ENCODE measurements at regions of chr12 and their contacts with region 1.

Region 1: DNA sequence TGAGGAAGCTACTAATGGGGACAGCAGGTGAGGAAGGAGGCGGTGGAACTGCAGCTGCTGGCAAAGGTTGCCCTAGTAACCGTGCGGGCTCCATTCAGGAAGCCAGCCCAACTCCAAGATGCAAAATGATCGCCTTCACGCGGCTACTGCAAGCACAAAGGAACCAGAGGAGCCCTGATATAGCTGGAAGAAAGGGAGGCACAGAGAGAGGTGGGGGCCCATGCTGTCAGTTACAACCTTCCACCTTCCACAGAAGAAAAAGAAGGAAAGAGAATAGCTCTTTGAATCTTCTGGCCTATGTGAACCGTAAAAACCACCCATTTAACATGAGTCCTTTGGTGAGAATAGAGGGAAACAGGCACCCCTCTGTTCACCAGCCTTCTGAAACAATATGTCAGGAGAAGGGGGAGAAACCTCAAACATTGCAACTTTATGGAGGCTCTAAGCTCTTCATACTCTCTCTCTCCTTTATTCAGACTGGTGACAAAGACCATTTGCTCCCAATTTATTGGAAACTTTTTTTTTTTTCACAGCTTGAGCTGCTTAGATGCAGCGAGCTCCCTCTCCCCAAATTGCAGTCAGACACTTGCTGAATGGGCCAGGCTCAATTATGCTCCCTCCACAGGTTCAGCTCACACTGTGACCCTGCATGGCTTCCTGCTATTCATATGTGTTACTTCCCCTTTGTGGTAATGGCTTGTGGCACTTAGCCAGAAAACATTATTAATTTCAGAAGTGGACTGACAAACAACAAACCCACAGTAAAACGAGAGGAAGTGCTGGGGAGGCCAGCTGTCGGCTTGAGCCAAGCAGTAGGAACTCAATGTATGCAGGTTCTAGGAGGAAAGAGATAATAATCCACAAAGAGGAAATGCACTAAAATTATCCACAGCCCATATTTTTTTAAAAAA is 6.2 kb downstream of the DUSP6 start:
- DNase-seq: peak; percentile 70 to 80 (median 72)
- ATAC-seq: peak; percentile 67 to 84 (median 80)
- H3K4me3 ChIP-seq: peak overlapping the region in 9 of 12 donors; percentile 76 to 95 (median 87)
- H3K27ac ChIP-seq: peak overlapping the region; percentile 17 to 99 (median 72)
- H3K4me1 ChIP-seq: peaks cover 3 to 66% (median 40%) of the 10 kb centered on the region in 12 donors
- H3K27me3 ChIP-seq: no peaks in the 10 kb centered on the region
- CTCF ChIP-seq: no peak
- POLR2A ChIP-seq: no peak

Region 2: DNA sequence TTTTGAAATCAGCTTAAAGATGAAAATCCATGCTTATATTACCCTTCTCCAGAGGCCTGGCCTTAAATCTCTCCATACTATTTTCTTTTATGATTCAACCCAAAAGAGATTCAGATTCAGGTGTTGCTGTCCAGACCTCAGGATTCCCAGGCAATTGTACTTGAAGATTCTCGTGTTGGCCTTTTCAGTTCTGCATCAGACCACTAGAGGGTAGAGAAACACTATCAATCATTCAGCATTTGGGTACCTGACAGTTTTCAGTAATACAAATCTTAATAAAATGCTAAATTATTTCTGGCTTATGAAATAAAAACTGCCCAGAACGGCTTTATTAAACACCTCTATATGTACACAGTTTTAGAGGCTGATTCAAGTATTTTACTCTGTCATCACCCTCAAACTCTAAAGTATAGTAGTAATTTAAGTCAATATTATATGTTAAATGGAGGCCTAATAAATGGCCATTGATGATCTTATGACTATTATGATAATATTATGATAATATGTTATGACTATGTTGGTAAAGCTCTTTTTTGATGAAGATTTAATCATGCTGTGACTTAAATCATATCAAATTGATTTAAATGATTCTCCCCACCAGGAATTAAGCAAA is 294.9 kb before region 1 on chr12:
- intact Hi-C with region 1: loop called in 6 of 10 experiments (anchors 5 to 10 kb)
- DNase-seq: peak in 2 of 5 donors; percentile 15 to 22
- ATAC-seq: peak in 3 of 4 donors; percentile 68 to 76 (median 70)
- H3K4me3 ChIP-seq: no peak overlapping the region
- H3K27ac ChIP-seq: no peak overlapping the region
- H3K4me1 ChIP-seq: peaks cover 0 to 12% (median 0%) of the 10 kb centered on the region in 12 donors
- H3K27me3 ChIP-seq: no peaks in the 10 kb centered on the region
- CTCF ChIP-seq: peak; percentile 86 to 97 (median 94)
- POLR2A ChIP-seq: no peak

Region 3: DNA sequence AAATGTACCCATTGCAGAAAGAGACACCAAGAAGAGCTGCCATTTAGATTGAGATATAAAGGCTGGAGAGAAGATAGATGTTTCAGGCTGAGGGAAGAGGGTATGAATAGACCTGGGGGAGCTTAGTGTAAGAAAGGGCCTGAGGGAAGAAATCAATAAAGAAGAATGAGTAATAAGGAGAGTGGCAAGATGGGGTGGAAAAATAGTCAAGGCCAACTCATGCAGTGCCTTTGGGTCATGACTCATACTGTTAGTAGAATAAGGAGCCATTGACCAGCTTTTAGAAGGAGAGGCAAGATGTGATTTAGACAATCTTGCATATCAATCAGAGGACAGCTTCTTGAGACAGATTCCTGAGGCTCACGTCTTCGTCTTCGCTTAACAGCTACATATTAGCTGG is 281.3 kb before region 1 on chr12:
- intact Hi-C with region 1: loop called in 2 of 10 experiments (anchors 5 to 10 kb)
- DNase-seq: no peak
- ATAC-seq: no peak
- H3K4me3 ChIP-seq: no peak overlapping the region
- H3K27ac ChIP-seq: no peak overlapping the region
- H3K4me1 ChIP-seq: peaks cover 0 to 7% (median 3%) of the 10 kb centered on the region in 12 donors
- H3K27me3 ChIP-seq: no peaks in the 10 kb centered on the region
- CTCF ChIP-seq: no peak
- POLR2A ChIP-seq: no peak

Region 4: GRCh38 chr12:89080793-89081465 is 265.2 kb before region 1 on chr12:
- intact Hi-C with region 1: loop called in 1 of 10 experiments (anchors 10 kb)
- DNase-seq: no peak
- ATAC-seq: peak in 2 of 4 donors; percentile 47 to 65
- H3K4me3 ChIP-seq: no peak overlapping the region
- H3K27ac ChIP-seq: peak overlapping the region in 3 of 12 donors; percentile 4 to 44 (median 17)
- H3K4me1 ChIP-seq: peaks cover 0 to 40% (median 16%) of the 10 kb centered on the region in 12 donors
- H3K27me3 ChIP-seq: no peaks in the 10 kb centered on the region
- CTCF ChIP-seq: no peak
- POLR2A ChIP-seq: no peak

Region 5: GRCh38 chr12:89162704-89163261 is 183.3 kb before region 1 on chr12:
- intact Hi-C with region 1: loop called in 5 of 10 experiments (anchors 5 to 10 kb)
- DNase-seq: peak; percentile 42 to 73 (median 53)
- ATAC-seq: peak; percentile 51 to 91 (median 87)
- H3K4me3 ChIP-seq: no peak overlapping the region
- H3K27ac ChIP-seq: peak overlapping the region; percentile 1 to 90 (median 64)
- H3K4me1 ChIP-seq: peaks cover 0 to 88% (median 22%) of the 10 kb centered on the region in 12 donors
- H3K27me3 ChIP-seq: no peaks in the 10 kb centered on the region
- CTCF ChIP-seq: no peak
- POLR2A ChIP-seq: no peak

Region 6: GRCh38 chr12:89212339-89212771 is 133.7 kb before region 1 on chr12:
- intact Hi-C with region 1: loop called in 5 of 10 experiments (anchors 2 to 10 kb)
- DNase-seq: peak in 4 of 5 donors; percentile 38 to 54 (median 48)
- ATAC-seq: peak; percentile 83 to 97 (median 86)
- H3K4me3 ChIP-seq: no peak overlapping the region
- H3K27ac ChIP-seq: peak overlapping the region; percentile 35 to 76 (median 60)
- H3K4me1 ChIP-seq: peaks cover 0 to 43% (median 9%) of the 10 kb centered on the region in 12 donors
- H3K27me3 ChIP-seq: no peaks in the 10 kb centered on the region
- CTCF ChIP-seq: no peak
- POLR2A ChIP-seq: no peak

Region 7: GRCh38 chr12:89236748-89237388 is 109.2 kb before region 1 on chr12:
- intact Hi-C with region 1: loop called in 3 of 10 experiments (anchors 2 to 10 kb)
- DNase-seq: no peak
- ATAC-seq: no peak
- H3K4me3 ChIP-seq: no peak overlapping the region
- H3K27ac ChIP-seq: peak overlapping the region in 1 of 12 donors; percentile 34
- H3K4me1 ChIP-seq: peaks cover 0 to 39% (median 21%) of the 10 kb centered on the region in 12 donors
- H3K27me3 ChIP-seq: no peaks in the 10 kb centered on the region
- CTCF ChIP-seq: no peak
- POLR2A ChIP-seq: no peak

Region 8: GRCh38 chr12:89373763-89374572 is 27.9 kb after region 1 on chr12:
- intact Hi-C with region 1: no loop called
- DNase-seq: peak in 2 of 5 donors; percentile 40 to 48
- ATAC-seq: peak; percentile 80 to 93 (median 85)
- H3K4me3 ChIP-seq: no peak overlapping the region
- H3K27ac ChIP-seq: peak overlapping the region; percentile 0 to 79 (median 62)
- H3K4me1 ChIP-seq: peaks cover 0 to 50% (median 27%) of the 10 kb centered on the region in 12 donors
- H3K27me3 ChIP-seq: no peaks in the 10 kb centered on the region
- CTCF ChIP-seq: no peak
- POLR2A ChIP-seq: no peak

Measured in heart left ventricle (tissue), 16 donors.